ENCODE measurements at regions of chr17 and their contacts with region 1.

Region 1: GRCh38 chr17:50507871-50508572 is at the start of gene MYCBPAP:
- DNase-seq: peak; percentile 95
- H3K4me3 Mint-ChIP-seq: peak within 1 kb of the TSS; percentile 94
- H3K27ac Mint-ChIP-seq: peak within 1 kb of the TSS; percentile 91
- H3K4me1 Mint-ChIP-seq: peaks cover 55% of the 10 kb centered on the region
- H3K27me3 Mint-ChIP-seq: no peaks in the 10 kb centered on the region
- total RNA-seq, gene MYCBPAP: 3.5 TPM in 2 replicates

Region 2: GRCh38 chr17:50541716-50542688 is 34.0 kb after region 1 on chr17:
- intact Hi-C with region 1: loop called (anchors 2 kb)
- DNase-seq: peak; percentile 98
- H3K4me3 Mint-ChIP-seq: peak overlapping the region; percentile 83
- H3K27ac Mint-ChIP-seq: peak overlapping the region; percentile 45
- H3K4me1 Mint-ChIP-seq: peaks cover 16% of the 10 kb centered on the region
- H3K27me3 Mint-ChIP-seq: peaks cover 19% of the 10 kb centered on the region

Region 3: DNA sequence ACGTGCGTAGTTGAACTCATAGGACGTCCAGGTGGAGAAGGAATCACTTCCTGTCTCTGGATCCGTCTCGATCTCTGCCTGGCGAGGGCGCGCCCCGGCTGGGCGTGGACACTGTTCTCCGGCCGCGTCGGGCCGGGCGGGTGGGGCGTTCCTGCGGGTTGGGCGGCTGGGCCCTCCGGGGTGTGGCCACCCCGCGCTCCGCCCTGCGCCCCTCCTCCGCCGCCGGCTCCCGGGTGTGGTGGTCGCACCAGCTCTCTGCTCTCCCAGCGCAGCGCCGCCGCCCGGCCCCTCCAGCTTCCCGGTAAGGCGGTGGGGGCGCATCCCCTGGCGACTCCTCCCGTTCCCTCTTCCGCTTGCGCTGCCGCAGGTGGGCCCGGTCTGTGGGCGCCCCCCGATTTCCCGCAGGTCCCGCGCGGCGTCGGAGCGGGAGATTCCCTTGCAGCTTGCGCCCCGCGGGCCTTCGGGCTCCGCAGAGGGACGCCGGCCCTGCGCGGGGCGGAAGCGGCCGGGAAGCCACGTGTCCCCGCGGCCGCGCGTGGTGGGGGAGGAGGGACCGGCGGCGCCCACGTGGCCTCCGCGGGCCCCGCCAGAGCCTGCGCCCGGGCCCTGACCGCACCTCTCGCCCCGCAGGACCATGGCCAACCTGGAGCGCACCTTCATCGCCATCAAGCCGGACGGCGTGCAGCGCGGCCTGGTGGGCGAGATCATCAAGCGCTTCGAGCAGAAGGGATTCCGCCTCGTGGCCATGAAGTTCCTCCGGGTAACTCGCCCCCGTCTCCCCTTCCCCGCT is 658.4 kb after region 1 on chr17 and contains the start of gene NME2:
- intact Hi-C with region 1: no loop called
- DNase-seq: peak; percentile 94
- H3K4me3 Mint-ChIP-seq: peak within 1 kb of the TSS; percentile 88
- H3K27ac Mint-ChIP-seq: peak within 1 kb of the TSS; percentile 97
- H3K4me1 Mint-ChIP-seq: peaks cover 30% of the 10 kb centered on the region
- H3K27me3 Mint-ChIP-seq: no peaks in the 10 kb centered on the region
- total RNA-seq, gene NME2: 752 and 795 TPM in 2 replicates